ENCODE measurements at regions of chr10 and their contacts with region 1.

Region 1: GRCh38 chr10:23314835-23315239 is 29.8 kb downstream of the C10orf67 start:
- DNase-seq: peak; percentile 71
- H3K4me3 ChIP-seq: no peak overlapping the region
- H3K27ac ChIP-seq: no peak overlapping the region
- H3K27me3 ChIP-seq: peaks cover 12% of the 10 kb centered on the region
- CTCF ChIP-seq: peak; percentile 62

Region 2: GRCh38 chr10:23293145-23293724 is 21.6 kb before region 1 on chr10:
- CTCF ChIA-PET with region 1: interaction called, 10 read pairs
- POLR2A ChIA-PET with region 1: no interaction called
- DNase-seq: no peak
- H3K4me3 ChIP-seq: no peak overlapping the region
- H3K27ac ChIP-seq: no peak overlapping the region
- H3K27me3 ChIP-seq: peaks cover 8% of the 10 kb centered on the region
- CTCF ChIP-seq: peak; percentile 61

Region 3: DNA sequence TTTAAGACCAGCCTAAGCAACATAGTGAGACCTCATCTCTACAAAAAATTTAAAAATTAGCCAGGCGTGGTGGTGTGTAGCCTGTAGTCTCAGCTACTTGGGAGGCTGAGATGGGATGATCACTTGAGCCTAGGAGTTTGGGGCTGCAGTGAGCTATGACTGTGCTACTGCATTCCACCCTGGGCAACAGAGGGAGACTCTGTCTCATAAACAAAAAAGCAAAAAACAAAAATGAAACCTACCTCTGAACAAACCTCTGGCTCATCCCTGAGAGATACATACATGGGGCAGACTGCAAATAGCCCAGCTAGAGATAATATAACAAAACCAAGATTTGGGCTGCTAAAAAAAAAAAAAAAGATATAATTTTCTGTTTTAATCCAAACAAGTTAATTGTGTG is 10.3 kb after region 1 on chr10:
- CTCF ChIA-PET with region 1: interaction called, 17 read pairs
- POLR2A ChIA-PET with region 1: no interaction called
- DNase-seq: no peak
- H3K4me3 ChIP-seq: no peak overlapping the region
- H3K27ac ChIP-seq: no peak overlapping the region
- H3K27me3 ChIP-seq: no peaks in the 10 kb centered on the region
- CTCF ChIP-seq: no peak

Region 4: GRCh38 chr10:23525406-23525805 is 210.6 kb after region 1 on chr10:
- CTCF ChIA-PET with region 1: interaction called, 148 read pairs
- POLR2A ChIA-PET with region 1: no interaction called
- DNase-seq: no peak
- H3K4me3 ChIP-seq: no peak overlapping the region
- H3K27ac ChIP-seq: no peak overlapping the region
- H3K27me3 ChIP-seq: no peaks in the 10 kb centered on the region
- CTCF ChIP-seq: peak; percentile 38

Region 5: GRCh38 chr10:23556727-23557440 is 242.0 kb after region 1 on chr10:
- CTCF ChIA-PET with region 1: interaction called, 12 read pairs
- POLR2A ChIA-PET with region 1: no interaction called
- DNase-seq: no peak
- H3K4me3 ChIP-seq: no peak overlapping the region
- H3K27ac ChIP-seq: no peak overlapping the region
- H3K27me3 ChIP-seq: no peaks in the 10 kb centered on the region
- CTCF ChIP-seq: no peak

Measured in AG04450 (cell line).